Activated CD8-positive, alpha-beta T cell treated with anti-CD3 and anti-CD28 coated beads for 36 hours (primary cell): ENCODE measurements at regions of chr3 and their contacts with region 1.

Region 1: DNA sequence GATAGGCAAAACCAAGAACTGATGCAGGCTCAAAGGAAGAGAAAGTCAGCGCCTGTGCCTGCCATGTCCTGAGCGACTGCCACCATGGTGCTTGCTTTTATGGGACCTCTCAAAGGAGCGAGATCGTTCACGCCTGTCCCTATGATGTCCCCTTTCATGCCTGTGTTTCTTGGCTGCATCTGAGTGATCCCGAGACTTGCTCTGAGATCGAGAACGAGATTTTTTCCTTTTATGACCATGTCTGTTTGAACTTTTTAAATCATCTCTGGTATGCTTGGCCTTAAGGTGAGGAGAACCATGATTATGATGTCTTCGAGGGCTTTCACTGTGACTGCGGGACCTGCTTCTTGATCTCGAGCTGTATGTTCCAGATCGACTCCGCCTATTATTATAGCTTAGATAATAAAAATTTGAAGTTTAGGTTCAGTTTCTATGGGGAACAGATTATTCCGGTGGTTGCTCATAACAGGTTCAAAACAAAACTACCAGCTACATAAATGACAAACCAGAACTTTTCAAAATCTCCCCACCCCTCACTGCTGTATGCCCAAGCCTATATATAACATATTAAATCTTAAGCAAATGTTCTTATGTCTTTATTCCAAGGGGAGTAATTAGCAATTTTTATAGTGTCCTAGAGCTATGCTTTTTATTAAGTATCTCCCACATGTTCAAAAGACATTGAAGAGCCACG is 11.6 kb downstream of the CCNL1 start:
- DNase-seq: no peak
- ATAC-seq: peak; percentile 22
- H3K4me3 Mint-ChIP-seq: no peak overlapping the region
- H3K27ac Mint-ChIP-seq: peak overlapping the region; percentile 73
- H3K4me1 Mint-ChIP-seq: peaks cover 46% of the 10 kb centered on the region
- H3K27me3 Mint-ChIP-seq: no peaks in the 10 kb centered on the region
- CTCF ChIP-seq: no peak

Region 2: DNA sequence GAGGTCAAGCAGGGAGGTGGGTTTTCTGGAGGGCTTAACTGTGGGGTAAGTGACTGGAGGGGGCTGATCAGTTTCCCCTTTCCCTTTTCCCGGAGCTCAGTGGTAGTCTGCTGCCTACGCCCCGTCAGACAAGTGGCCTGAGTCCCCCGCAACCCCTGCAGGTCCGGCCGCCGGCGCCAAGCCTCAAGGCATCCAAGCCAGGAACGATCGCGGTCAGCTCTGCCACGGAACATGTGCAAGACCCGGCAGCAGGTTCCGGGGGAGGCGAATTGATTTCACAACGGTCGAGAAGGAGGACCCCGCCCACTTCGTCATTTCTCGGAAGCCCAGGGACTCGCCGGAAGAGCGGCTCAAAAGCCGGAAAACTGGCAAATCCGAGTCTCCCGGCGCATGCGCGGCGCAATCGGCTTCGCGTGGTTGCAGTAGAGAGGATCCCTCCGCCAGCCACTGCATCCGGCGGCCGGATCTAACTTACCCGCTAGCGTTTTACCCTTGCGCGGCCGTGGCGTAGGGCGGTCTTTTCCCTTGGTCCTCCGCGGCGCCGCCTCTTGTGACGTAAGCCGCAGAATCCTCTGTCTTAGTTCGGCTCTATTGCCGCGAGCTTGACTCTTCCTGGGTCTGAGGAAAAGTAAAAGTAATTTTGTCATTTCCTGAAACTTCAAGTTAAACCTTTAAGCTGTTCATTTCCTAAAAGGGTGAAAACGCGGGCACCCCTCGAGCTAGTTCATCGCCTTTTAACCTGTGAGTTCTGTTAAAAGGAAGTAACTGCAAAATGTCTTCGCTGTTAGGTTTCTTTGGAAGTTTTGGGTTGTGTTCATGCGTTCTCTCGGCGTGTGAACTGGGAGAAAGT is 26.5 kb after region 1 on chr3:
- CTCF ChIA-PET with region 1: interaction called, 3 read pairs
- POLR2A ChIA-PET with region 1: interaction called, 41 read pairs
- intact Hi-C with region 1: no loop called
- DNase-seq: peak; percentile 99
- ATAC-seq: peak; percentile 97
- H3K4me3 Mint-ChIP-seq: peak overlapping the region; percentile 84
- H3K27ac Mint-ChIP-seq: peak overlapping the region; percentile 92
- H3K4me1 Mint-ChIP-seq: peaks cover 29% of the 10 kb centered on the region
- H3K27me3 Mint-ChIP-seq: no peaks in the 10 kb centered on the region
- CTCF ChIP-seq: no peak